Calu3 (cell line): ENCODE measurements at regions of chr15 and their contacts with region 1.

Region 1: GRCh38 chr15:62649793-62650420 is 392.6 kb upstream of the TPM1 start:
- DNase-seq: no peak
- H3K4me3 Mint-ChIP-seq: no peak overlapping the region
- H3K27ac Mint-ChIP-seq: no peak overlapping the region
- H3K4me1 Mint-ChIP-seq: peaks cover 12% of the 10 kb centered on the region
- H3K27me3 Mint-ChIP-seq: peaks cover 3% of the 10 kb centered on the region
- CTCF ChIP-seq: no peak

Region 2: GRCh38 chr15:62711691-62712454 is 62.0 kb after region 1 on chr15:
- CTCF ChIA-PET with region 1: no interaction called
- intact Hi-C with region 1: loop called (anchors 10 kb)
- DNase-seq: no peak
- H3K4me3 Mint-ChIP-seq: no peak overlapping the region
- H3K27ac Mint-ChIP-seq: no peak overlapping the region
- H3K4me1 Mint-ChIP-seq: no peaks in the 10 kb centered on the region
- H3K27me3 Mint-ChIP-seq: no peaks in the 10 kb centered on the region
- CTCF ChIP-seq: no peak